Cardiac septum (tissue), 1 donor: ENCODE measurements at regions of chr2 and their contacts with region 1.

Region 1: DNA sequence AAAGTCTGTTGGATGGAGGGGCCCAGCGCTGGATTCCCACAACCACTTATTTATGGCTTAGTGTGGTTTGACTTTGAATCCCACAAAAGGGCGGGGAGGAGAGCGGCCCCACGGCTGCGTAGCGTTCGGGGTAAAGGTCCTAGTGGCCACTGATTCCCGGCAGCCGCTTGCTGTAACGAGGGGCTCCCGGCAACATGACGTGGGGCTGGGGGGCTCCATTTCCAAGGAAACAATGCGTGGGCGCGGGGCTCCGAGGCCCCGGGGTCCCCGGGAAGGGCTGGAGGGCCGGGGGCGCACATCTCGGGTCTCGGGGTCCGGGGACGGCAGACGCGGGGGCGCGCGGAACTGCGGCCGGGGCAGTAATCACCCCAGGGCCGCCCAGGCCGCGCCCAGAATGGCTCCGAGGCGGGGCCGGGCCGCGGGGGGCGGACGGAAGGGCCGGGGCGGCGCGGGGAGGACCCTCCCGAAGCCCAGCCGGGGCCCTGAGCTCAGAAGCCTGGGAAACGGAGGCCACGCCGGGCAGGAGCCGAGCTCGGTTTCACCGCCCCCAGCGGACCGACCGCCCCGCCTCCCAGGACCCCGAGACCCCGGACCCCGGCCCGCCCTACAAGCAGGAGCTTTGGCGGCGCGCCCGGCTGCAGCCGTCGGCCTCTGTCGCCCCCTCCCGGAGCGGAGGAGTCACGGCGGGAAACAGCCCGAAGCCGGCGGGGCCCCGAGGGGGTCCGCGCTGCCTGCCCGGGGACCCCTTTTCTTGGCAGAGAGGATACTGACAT is 11.9 kb upstream of the MLPH start:
- DNase-seq: peak; percentile 89

Region 2: DNA sequence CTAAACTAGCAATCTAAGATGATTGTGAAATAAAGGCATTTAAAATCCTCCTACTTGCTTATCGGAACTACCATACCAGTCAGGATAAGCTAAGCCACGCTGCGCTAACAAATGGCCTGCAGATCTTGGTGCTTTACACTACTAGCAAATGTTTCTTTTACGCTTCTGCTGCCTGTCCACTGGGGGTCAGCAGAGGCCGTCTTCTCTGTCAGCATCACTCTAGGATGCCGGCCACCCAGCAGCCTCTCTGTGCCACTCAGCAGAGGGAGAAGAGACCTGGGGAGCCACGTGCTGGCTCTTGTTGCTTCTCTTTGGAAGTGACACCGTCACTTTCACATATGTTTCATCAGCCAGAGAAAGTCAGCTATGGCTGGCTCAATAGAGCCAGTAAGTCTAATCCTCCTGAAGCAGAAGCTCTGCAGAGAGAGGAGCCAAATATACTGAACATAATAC is 352.9 kb before region 1 on chr2:
- intact Hi-C with region 1: loop called (anchors 2 kb)
- DNase-seq: no peak

Region 3: DNA sequence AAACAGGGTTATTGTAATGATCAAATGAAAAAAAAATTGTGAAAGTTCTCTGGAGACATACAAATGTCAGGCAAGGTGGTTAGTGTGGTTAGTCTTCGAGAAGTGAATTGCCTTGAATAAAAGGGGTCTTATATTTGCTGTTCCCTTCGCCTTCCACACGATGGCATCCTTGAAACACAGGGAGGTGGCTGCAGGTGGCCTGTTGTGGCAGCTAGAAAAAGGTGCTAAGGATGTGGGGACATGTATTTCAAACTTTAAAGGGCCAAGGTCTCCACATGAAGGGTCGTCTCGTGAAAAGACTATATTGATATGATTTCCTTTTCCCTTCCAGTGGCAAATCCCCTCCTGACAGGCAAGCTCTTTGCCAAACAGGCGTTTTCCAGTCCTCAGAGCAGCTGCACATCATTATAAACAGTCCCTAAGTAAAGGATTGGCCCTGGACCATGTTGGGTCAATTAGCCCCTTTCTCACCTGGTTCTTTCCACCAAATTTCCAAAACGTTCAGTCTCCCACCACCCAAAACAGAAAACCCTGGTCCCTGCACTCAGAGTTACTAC is 321.0 kb before region 1 on chr2:
- intact Hi-C with region 1: loop called (anchors 10 kb)
- DNase-seq: no peak

Region 4: GRCh38 chr2:237421542-237422116 is 53.5 kb before region 1 on chr2:
- intact Hi-C with region 1: loop called (anchors 1 kb)
- DNase-seq: peak; percentile 83

Region 5: GRCh38 chr2:237987268-237987667 is 512.2 kb after region 1 on chr2:
- intact Hi-C with region 1: no loop called
- DNase-seq: no peak